MCF 10A (cell line): ENCODE measurements at regions of chr1 and their contacts with region 1.

Region 1: GRCh38 chr1:213374369-213374768 is 323.3 kb downstream of the RPS6KC1 start:
- DNase-seq: peak; percentile 90
- H3K4me3 Mint-ChIP-seq: no peak overlapping the region
- H3K27ac Mint-ChIP-seq: no peak overlapping the region
- H3K4me1 Mint-ChIP-seq: peaks cover 4% of the 10 kb centered on the region
- H3K27me3 Mint-ChIP-seq: no peaks in the 10 kb centered on the region
- CTCF ChIP-seq: peak; percentile 99

Region 2: DNA sequence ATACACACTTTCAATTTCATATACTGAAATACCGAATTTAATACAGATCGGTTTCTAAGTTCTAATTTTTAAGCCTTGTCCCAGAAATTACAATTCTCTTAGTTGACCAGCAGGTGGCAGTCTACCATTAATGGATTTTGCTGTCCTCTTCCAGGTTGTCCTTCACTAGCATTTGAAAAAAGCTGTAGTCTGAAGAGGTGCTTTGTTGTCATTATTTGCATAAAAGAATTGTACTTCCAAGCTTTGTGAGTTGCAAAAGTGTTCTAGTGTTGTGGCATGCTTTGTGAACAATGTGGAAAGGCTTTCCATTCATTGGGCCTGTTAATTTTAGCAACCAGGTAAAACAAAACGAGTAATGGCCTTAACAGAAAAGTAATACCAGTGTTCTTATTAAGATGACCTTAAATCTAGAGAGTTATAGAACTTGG is 129.7 kb before region 1 on chr1:
- CTCF ChIA-PET with region 1: interaction called, 7 read pairs
- POLR2A ChIA-PET with region 1: no interaction called
- intact Hi-C with region 1: loop called (anchors 1 kb)
- DNase-seq: peak; percentile 88
- H3K4me3 Mint-ChIP-seq: no peak overlapping the region
- H3K27ac Mint-ChIP-seq: peak overlapping the region; percentile 17
- H3K4me1 Mint-ChIP-seq: no peaks in the 10 kb centered on the region
- H3K27me3 Mint-ChIP-seq: no peaks in the 10 kb centered on the region
- CTCF ChIP-seq: peak; percentile 97

Region 3: GRCh38 chr1:213564215-213564659 is 189.9 kb after region 1 on chr1:
- CTCF ChIA-PET with region 1: no interaction called
- POLR2A ChIA-PET with region 1: no interaction called
- intact Hi-C with region 1: loop called (anchors 2 kb)
- DNase-seq: peak; percentile 68
- H3K4me3 Mint-ChIP-seq: no peak overlapping the region
- H3K27ac Mint-ChIP-seq: no peak overlapping the region
- H3K4me1 Mint-ChIP-seq: no peaks in the 10 kb centered on the region
- H3K27me3 Mint-ChIP-seq: peaks cover 17% of the 10 kb centered on the region
- CTCF ChIP-seq: peak; percentile 46